ENCODE measurements at regions of chr15 and their contacts with region 1.

Region 1: DNA sequence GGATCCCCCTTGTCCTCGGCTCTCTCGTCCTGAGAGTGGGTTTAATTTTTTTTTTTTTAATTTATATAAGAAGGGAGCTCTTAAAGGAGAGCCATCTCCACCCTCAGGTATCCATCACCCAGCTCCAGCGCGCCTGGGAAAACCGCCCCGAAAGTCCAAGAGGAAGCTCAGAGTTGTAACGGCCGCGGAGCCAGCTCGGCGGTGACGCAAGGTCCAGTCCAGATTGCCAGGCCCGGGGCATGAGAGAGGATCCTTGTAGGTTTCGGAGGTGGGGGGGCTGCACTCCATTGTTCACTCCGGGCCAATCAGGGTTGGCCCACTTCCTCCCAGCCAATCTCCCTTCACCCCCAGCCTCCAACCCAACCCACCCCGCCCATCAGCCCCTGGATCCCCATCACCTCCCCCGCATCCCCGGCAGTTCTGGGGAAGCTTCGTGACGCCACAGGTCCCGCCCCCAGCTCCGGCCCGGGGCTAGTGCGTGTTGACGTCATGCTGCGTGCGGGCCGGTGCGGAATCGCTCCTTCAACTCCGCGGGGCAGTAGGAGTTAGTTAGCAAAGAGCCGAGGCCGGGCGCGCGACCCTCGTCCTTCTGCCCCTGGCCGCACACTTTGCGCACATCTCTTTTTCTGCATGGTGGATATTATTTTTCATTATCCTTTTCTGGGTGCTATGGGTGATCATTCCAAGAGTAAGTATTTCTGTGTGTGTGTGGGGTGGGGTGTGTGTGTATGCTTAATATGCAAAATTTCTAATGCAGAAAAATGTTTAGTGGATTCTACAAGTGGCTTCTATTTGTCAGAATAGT is at the start of gene ISL2:
- DNase-seq: peak; percentile 79
- H3K4me3 Mint-ChIP-seq: peak within 1 kb of the TSS; percentile 92
- H3K27ac Mint-ChIP-seq: peak within 1 kb of the TSS; percentile 85
- H3K4me1 Mint-ChIP-seq: peaks cover 58% of the 10 kb centered on the region
- H3K27me3 Mint-ChIP-seq: peaks cover 51% of the 10 kb centered on the region
- total RNA-seq, gene ISL2: 1.3 TPM in 2 replicates

Region 2: DNA sequence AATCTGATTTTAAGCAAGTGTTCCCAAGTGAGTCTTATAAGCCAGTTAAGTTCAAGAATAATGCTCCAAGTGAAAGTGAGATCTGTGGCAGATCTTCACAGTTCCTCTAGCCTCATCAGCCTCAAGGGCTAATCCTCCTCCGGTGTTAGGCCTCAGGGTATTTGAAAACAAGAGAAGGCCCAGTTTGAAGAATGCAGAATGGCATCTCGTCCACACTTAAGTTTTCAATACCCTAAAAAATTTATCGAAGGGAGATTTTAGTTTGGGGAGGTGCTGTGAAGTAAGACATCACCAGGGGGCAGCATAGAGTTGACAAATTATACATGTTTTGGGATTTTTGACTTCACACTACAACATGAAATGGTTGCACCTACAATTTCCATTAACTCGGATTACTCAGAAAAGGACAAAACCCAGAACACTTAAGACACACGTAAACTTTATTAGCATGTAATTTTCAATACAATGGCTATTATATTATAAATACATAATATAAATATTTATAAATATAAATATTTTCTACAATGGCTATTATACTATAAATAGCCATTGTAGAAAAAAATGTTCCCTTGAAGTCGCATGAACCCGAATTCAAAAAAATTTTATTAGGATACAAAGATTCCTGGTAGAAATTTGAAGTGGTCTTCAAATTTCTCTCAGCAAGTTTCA is 279.0 kb before region 1 on chr15:
- intact Hi-C with region 1: loop called (anchors 10 kb)
- DNase-seq: no peak
- H3K4me3 Mint-ChIP-seq: no peak overlapping the region
- H3K27ac Mint-ChIP-seq: no peak overlapping the region
- H3K4me1 Mint-ChIP-seq: peaks cover 26% of the 10 kb centered on the region
- H3K27me3 Mint-ChIP-seq: peaks cover 52% of the 10 kb centered on the region

Region 3: DNA sequence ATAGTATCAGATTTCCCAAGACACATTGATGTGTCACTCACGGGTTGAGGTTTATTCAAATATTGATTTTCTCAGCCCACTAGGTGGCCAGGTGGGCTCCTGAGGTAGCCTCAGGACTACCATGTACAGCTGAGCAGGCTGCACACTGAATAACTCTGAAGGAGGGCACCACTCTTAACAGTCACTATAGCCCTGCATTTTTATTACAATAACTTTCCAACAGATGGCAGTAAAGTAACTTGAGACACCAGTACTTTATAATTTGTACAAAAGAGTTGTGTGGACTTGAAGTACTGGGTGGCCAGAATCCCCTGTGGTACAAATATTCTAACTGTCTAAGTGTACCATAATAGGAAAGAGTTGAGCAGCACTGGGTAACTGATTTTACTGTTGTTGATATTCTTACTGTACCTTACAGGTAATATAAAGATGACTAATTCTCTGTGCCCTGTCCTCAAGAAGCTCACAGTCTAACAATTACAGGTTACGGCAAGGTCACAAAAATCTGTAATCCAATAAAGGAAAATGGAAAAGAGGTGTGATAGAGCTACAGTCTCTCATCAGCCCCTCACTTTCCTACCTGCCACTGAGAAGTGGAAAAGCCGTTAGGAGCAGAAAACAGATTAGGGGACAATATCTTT is 101.2 kb before region 1 on chr15:
- intact Hi-C with region 1: loop called (anchors 1 kb)
- DNase-seq: no peak
- H3K4me3 Mint-ChIP-seq: no peak overlapping the region
- H3K27ac Mint-ChIP-seq: no peak overlapping the region
- H3K4me1 Mint-ChIP-seq: no peaks in the 10 kb centered on the region
- H3K27me3 Mint-ChIP-seq: no peaks in the 10 kb centered on the region

Region 4: GRCh38 chr15:76311100-76311953 is 25.1 kb before region 1 on chr15 and contains the start of gene ETFA:
- intact Hi-C with region 1: loop called (anchors 1 kb)
- DNase-seq: peak; percentile 88
- H3K4me3 Mint-ChIP-seq: peak within 1 kb of the TSS; percentile 90
- H3K27ac Mint-ChIP-seq: peak within 1 kb of the TSS; percentile 82
- H3K4me1 Mint-ChIP-seq: peaks cover 31% of the 10 kb centered on the region
- H3K27me3 Mint-ChIP-seq: peaks cover 11% of the 10 kb centered on the region
- total RNA-seq, gene ETFA: 129 and 133 TPM in 2 replicates

Region 5: DNA sequence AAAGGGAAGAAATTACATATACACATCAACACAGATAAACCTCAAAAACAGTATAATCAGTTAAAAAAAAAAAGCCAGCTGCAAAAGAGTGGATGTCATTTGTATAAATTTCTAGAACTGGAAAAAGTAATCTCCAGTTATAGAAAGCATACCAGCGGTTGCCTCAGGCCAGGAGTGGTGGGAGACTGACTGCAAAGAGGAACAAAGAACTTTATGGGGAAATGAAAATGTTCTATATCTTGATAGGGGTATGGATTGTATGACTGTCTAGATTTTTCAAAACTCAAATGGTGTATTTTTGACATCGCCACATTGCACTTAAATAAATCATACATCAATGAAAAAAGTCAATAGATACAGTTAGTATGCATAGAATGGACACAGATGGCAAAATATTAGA is 327.1 kb after region 1 on chr15:
- intact Hi-C with region 1: loop called (anchors 10 kb)
- DNase-seq: no peak
- H3K4me3 Mint-ChIP-seq: no peak overlapping the region
- H3K27ac Mint-ChIP-seq: no peak overlapping the region
- H3K4me1 Mint-ChIP-seq: no peaks in the 10 kb centered on the region
- H3K27me3 Mint-ChIP-seq: no peaks in the 10 kb centered on the region

Measured in activated T-helper 1 cell treated with anti-CD3 and anti-CD28 coated beads, Interleukin-12 subunit alpha, Interleukin-12 subunit beta, Interleukin-2, Interleukin-4 antibody, amounts not matched to agents 30 ng/mL and 10 ng/mL and 1 ng/mL, durations not matched to agents 14 hours and 24 hours and 36 hours (primary cell).